ENCODE measurements at regions of chr15 and their contacts with region 1.

Region 1: DNA sequence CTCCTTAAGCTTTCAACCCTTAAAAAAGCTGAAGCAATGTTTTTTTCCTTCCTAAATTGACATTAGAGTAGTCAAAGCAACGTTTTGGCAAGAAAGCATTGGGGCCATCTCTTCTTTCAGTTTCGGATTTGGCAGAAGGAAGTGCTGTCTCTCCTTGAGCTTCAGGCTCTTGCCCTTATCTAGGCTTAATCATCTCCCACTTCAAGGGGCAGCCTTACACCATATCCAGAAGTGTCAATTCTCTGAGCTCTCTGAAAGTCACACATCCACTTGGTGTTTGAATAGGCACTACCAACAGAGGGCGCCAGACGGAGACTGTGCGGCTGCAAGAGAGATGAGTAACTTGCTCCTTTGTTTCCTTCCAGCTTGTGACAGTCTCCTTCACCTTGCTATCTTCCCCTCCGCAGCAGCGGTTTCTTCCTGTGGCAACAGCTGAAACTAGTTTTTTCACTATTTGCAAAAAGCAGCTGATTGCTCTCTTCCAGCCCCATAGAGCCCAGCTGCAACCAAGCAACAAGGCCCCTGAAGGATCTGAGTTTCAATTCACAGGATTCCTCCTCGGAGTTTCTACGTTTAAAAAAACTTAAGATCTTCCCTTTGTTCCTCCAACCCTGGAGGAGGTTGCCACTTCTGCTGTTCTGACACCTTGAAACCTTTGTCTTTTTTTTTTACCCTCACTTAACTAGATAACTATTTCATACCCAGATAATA is 147.0 kb upstream of the SLCO3A1 start:
- DNase-seq: peak; percentile 95
- ATAC-seq: peak; percentile 100
- H3K4me3 Mint-ChIP-seq: peak overlapping the region; percentile 56
- H3K27ac Mint-ChIP-seq: peak overlapping the region; percentile 85
- H3K4me1 Mint-ChIP-seq: peaks cover 35% of the 10 kb centered on the region
- H3K27me3 Mint-ChIP-seq: peaks cover 18% of the 10 kb centered on the region

Region 2: DNA sequence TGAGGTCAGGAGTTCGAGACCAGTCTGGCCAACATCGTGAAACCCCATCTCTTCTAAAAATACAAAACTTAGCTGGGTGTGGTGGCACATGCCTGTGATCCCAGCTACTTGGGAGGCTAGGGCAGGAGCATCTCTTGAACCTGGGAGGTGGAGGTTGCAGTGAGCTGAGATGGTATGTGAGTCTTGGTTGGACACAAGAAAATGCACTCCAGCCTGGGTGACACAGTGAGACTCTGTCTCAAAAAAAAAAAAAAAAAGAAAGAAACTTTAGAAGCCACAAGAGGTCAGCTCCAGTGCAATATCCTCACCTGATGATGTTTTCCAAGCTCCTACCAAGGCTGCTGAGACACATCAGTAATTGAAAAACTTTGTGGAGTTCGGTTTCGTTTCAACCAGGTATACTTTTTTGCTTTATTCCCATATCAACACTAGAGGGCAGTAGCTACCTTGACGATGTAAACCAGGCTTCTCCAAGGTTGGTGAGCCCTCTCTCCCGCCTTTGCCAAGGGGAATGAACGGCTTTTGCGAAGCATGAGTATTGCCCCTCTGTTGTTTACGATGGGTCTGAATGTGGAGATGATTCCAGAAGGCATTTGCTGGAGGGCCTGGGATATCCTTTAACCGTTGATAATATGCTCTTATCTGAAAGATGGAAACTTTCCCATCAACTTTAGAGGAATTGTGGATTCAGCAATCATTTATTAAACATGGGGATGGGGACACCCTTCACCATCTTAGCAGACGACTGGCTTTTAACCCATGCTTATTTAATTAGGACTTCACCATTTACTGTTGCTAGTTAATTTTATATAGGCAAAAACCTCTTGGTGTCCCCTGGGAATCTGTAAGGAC is 403.7 kb before region 1 on chr15:
- CTCF ChIA-PET with region 1: interaction called, 43 read pairs
- POLR2A ChIA-PET with region 1: no interaction called
- DNase-seq: peak; percentile 45
- ATAC-seq: peak; percentile 74
- H3K4me3 Mint-ChIP-seq: no peak overlapping the region
- H3K27ac Mint-ChIP-seq: peak overlapping the region; percentile 64
- H3K4me1 Mint-ChIP-seq: peaks cover 53% of the 10 kb centered on the region
- H3K27me3 Mint-ChIP-seq: peaks cover 41% of the 10 kb centered on the region

Region 3: DNA sequence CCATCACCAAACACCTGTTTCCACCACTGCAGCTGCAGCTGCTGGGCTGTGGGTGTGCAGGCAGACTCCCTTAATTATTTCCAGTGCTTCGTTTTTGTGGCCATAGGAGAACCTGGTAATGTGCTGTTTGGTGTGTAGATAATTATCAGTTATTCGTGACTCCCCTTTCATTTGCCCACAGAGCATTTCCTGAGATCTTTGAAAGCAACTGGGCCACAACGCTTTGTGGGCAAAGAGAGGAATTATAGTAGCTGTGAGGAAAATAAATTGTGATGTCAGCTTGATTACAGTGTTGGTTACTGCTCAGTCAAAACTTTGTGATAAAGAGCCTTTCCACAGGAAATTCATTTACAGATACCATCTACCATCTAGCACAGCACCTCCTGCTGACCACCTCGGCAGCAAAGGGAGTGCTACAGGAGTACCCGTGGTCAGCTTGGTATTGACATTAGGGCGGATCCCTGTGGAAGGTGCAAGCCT is 46.3 kb before region 1 on chr15:
- CTCF ChIA-PET with region 1: interaction called, 11 read pairs
- POLR2A ChIA-PET with region 1: interaction called, 3 read pairs
- DNase-seq: peak; percentile 32
- ATAC-seq: peak; percentile 70
- H3K4me3 Mint-ChIP-seq: no peak overlapping the region
- H3K27ac Mint-ChIP-seq: peak overlapping the region; percentile 16
- H3K4me1 Mint-ChIP-seq: peaks cover 31% of the 10 kb centered on the region
- H3K27me3 Mint-ChIP-seq: peaks cover 36% of the 10 kb centered on the region

Region 4: DNA sequence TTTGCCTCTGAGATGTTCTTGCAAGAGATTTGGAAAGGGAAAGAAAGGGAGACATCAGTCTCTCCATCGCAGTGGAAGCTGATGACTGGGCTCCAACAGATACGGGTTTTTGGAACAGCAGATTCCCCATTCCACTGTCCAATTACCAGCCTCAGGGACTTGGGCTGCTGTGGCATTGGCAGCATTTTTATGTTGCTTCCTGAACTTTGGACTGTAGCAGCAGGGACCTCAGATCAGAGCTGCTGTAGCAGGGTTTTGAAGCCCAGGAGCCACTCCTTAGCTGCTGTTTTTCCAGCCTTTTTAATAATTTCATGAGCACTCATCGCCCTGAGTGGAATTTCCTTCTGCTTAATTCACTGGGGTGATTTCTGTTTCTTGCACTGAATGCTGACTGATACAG is 11.3 kb after region 1 on chr15:
- CTCF ChIA-PET with region 1: interaction called, 21 read pairs
- POLR2A ChIA-PET with region 1: no interaction called
- DNase-seq: no peak
- ATAC-seq: no peak
- H3K4me3 Mint-ChIP-seq: no peak overlapping the region
- H3K27ac Mint-ChIP-seq: no peak overlapping the region
- H3K4me1 Mint-ChIP-seq: no peaks in the 10 kb centered on the region
- H3K27me3 Mint-ChIP-seq: peaks cover 55% of the 10 kb centered on the region

Region 5: DNA sequence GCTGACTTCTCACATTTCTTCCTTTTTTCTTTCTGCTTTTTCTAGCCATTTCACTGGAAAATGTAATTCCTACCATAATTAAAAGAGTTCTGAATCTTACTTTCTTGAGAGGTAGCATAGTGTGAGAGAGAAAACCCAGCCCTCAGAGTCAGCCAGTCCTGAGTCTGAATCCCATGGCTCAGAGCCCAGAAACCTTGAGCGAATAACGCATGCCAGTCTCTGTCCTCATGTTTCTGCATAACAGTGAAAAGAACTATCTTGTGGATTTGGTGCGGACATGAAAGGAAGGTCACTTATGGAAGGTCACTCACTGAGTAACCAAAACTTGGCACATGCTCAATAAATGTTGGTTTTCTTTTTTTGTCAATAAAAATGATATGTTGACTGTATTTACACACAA is 117.8 kb after region 1 on chr15:
- CTCF ChIA-PET with region 1: interaction called, 12 read pairs
- POLR2A ChIA-PET with region 1: no interaction called
- DNase-seq: no peak
- ATAC-seq: no peak
- H3K4me3 Mint-ChIP-seq: no peak overlapping the region
- H3K27ac Mint-ChIP-seq: no peak overlapping the region
- H3K4me1 Mint-ChIP-seq: no peaks in the 10 kb centered on the region
- H3K27me3 Mint-ChIP-seq: peaks cover 6% of the 10 kb centered on the region

Region 6: GRCh38 chr15:91839867-91840266 is 133.4 kb after region 1 on chr15:
- CTCF ChIA-PET with region 1: no interaction called
- POLR2A ChIA-PET with region 1: no interaction called
- DNase-seq: no peak
- ATAC-seq: no peak
- H3K4me3 Mint-ChIP-seq: no peak overlapping the region
- H3K27ac Mint-ChIP-seq: no peak overlapping the region
- H3K4me1 Mint-ChIP-seq: no peaks in the 10 kb centered on the region
- H3K27me3 Mint-ChIP-seq: peaks cover 28% of the 10 kb centered on the region

Region 7: DNA sequence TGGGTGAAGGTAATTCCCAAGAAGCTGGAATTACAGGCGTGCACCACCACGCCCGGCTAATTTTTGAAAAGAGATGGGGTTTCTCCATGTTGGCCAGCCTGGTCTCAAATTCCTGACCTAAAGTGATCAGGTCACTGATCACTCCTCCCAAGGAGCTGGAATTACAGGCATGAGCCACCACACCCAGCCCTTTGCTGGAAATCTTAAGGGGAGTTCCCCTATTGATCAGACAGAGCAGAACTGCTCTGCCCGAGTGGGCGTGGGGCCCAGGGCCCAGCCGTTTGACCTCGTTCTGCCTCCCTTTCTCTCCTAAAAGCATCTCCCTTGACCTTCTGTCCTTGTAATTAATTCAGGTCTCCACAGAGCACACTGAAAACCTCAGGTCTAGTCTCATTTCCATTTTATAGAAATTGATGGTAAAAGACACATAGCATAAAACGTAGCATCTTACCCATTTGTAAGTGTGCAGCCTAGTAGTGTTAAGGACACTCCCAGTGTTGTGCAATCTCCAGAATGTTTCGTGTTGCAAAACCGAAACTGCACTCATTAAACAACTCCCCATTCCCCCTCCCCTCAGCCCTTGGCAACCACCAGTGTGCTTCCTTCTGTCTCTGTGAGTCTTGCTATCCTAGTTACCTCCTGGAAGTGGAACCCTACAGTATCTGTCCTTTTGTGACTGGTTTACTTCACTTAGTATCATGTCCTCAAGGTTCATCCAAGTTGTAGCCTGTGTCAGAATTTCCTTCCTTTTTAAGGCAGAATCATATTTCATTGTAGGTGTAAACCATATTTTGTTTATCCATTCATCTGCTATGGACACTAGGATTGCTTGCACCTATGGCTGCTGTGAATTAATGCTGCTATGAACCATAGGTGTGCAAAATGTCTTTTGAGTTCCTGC is 236.4 kb after region 1 on chr15:
- CTCF ChIA-PET with region 1: interaction called, 11 read pairs
- POLR2A ChIA-PET with region 1: no interaction called
- DNase-seq: peak; percentile 60
- ATAC-seq: peak; percentile 85
- H3K4me3 Mint-ChIP-seq: peak overlapping the region; percentile 42
- H3K27ac Mint-ChIP-seq: no peak overlapping the region
- H3K4me1 Mint-ChIP-seq: peaks cover 22% of the 10 kb centered on the region
- H3K27me3 Mint-ChIP-seq: peaks cover 7% of the 10 kb centered on the region

Region 8: GRCh38 chr15:92097474-92098178 is 391.1 kb after region 1 on chr15:
- CTCF ChIA-PET with region 1: interaction called, 13 read pairs
- POLR2A ChIA-PET with region 1: no interaction called
- DNase-seq: peak; percentile 70
- ATAC-seq: peak; percentile 63
- H3K4me3 Mint-ChIP-seq: no peak overlapping the region
- H3K27ac Mint-ChIP-seq: peak overlapping the region; percentile 54
- H3K4me1 Mint-ChIP-seq: peaks cover 58% of the 10 kb centered on the region
- H3K27me3 Mint-ChIP-seq: no peaks in the 10 kb centered on the region

Measured in activated CD8-positive, alpha-beta T cell treated with anti-CD3 and anti-CD28 coated beads, Interleukin-2, amount 10 ng/mL, durations not matched to agents 7 days and 5 days (primary cell).